GM10248 (cell line): ENCODE measurements at regions of chr5 and their contacts with region 1.

Region 1: GRCh38 chr5:54480296-54480695 is 24.8 kb downstream of the HSPB3 start:
- DNase-seq: no peak
- CTCF ChIP-seq: no peak

Region 2: GRCh38 chr5:54469622-54470021 is 10.7 kb before region 1 on chr5:
- CTCF ChIA-PET with region 1: interaction called, 10 read pairs
- POLR2A ChIA-PET with region 1: no interaction called
- DNase-seq: peak; percentile 29
- CTCF ChIP-seq: no peak

Region 3: DNA sequence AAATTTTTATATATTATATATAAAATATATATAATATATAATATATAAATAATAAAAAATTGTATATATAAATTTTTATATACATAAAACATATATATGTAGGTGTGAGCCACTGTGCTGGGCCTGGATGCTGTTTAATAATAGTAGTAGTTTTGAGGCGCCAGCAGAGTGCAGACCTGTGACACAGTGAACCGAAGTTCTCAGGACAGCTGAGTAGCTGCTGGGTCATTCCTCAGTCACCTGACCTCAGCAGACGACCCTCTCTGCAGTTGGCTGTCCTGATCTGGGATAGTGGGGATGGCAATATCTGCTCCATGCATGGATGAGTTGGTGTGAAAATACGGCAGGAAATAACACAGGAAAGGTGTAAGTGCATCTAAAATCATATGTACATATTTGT is 34.0 kb after region 1 on chr5:
- CTCF ChIA-PET with region 1: no interaction called
- POLR2A ChIA-PET with region 1: no interaction called
- DNase-seq: no peak
- CTCF ChIP-seq: no peak

Region 4: DNA sequence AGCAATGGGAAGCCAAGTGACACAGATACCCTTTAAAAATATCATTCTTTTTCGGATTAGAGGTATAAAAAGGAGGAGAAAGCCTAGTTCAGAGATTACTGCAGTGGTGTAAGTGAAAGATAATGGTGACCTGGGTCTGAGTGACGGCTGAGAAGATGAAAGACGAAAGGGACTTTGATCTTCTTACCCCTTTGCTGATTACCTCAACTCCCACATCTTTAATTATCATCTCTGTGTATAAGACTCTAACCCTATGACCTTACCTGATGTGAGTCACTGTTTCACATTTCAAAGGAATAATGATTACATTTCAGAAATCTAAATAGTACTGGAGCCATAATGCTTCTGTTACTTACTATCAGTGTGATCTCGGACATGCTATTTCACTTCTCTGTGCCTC is 774.5 kb after region 1 on chr5:
- CTCF ChIA-PET with region 1: no interaction called
- POLR2A ChIA-PET with region 1: no interaction called
- DNase-seq: no peak
- CTCF ChIP-seq: no peak

Region 5: GRCh38 chr5:55564721-55565120 is 1084.4 kb after region 1 on chr5:
- CTCF ChIA-PET with region 1: no interaction called
- POLR2A ChIA-PET with region 1: no interaction called
- DNase-seq: peak; percentile 21
- CTCF ChIP-seq: no peak